AG04450 (cell line): ENCODE measurements at regions of chr11 and their contacts with region 1.

Region 1: GRCh38 chr11:124402326-124402922 is 3.6 kb upstream of the OR8B3 start:
- DNase-seq: peak; percentile 74
- H3K4me3 ChIP-seq: no peak overlapping the region
- H3K27ac ChIP-seq: no peak overlapping the region
- H3K27me3 ChIP-seq: no peaks in the 10 kb centered on the region
- CTCF ChIP-seq: peak; percentile 88

Region 2: GRCh38 chr11:124429599-124429998 is 27.2 kb after region 1 on chr11:
- CTCF ChIA-PET with region 1: interaction called, 15 read pairs
- POLR2A ChIA-PET with region 1: no interaction called
- DNase-seq: no peak
- H3K4me3 ChIP-seq: no peak overlapping the region
- H3K27ac ChIP-seq: no peak overlapping the region
- H3K27me3 ChIP-seq: no peaks in the 10 kb centered on the region
- CTCF ChIP-seq: no peak

Region 3: DNA sequence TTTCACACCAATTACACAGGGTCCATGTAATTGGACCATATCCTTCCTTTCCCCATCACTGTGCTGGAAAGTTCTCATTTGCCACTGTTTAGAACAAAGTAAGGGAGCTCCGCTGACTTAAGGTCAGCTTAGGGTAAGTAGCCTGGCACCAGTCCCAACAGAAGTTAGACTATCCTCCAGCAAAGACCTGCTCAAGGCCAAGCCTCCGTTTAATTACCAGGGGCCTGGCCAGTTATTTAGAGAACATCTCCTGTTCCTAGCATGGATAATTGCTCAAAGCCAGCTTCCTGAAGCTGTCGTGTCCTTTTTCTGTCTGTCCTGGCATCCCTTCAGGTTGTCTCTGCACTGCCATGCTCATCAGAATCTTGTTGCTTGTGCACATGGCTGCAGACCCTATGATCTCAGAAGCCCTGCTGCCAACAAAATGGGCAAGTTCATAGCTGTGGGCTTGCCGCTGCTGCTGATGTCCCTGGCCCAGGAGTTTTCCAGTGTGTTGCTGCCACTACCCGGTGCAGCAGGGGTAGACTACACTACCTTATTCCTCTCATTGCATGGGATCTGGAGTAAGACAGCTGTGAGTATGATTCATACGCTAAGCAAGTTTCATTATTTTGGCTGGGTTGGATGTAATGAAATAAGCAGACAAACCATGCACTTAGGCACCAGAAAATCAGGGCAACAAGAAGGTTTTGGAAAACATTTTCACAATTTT is 175.4 kb after region 1 on chr11:
- CTCF ChIA-PET with region 1: interaction called, 19 read pairs
- POLR2A ChIA-PET with region 1: no interaction called
- DNase-seq: no peak
- H3K4me3 ChIP-seq: no peak overlapping the region
- H3K27ac ChIP-seq: no peak overlapping the region
- H3K27me3 ChIP-seq: peaks cover 9% of the 10 kb centered on the region
- CTCF ChIP-seq: no peak

Region 4: GRCh38 chr11:124595302-124595701 is 192.9 kb after region 1 on chr11:
- CTCF ChIA-PET with region 1: interaction called, 17 read pairs
- POLR2A ChIA-PET with region 1: no interaction called
- DNase-seq: no peak
- H3K4me3 ChIP-seq: no peak overlapping the region
- H3K27ac ChIP-seq: no peak overlapping the region
- H3K27me3 ChIP-seq: peaks cover 13% of the 10 kb centered on the region
- CTCF ChIP-seq: no peak